Activated CD4-positive, alpha-beta T cell treated with anti-CD3 and anti-CD28 coated beads for 36 hours (primary cell): ENCODE measurements at regions of chr5 and their contacts with region 1.

Region 1: GRCh38 chr5:135398853-135399523 is at the start of gene MACROH2A1:
- DNase-seq: peak; percentile 92
- ATAC-seq: peak; percentile 88
- H3K4me3 Mint-ChIP-seq: peak within 1 kb of the TSS; percentile 86
- H3K27ac Mint-ChIP-seq: peak within 1 kb of the TSS; percentile 91
- H3K4me1 Mint-ChIP-seq: peaks cover 41% of the 10 kb centered on the region
- H3K27me3 Mint-ChIP-seq: no peaks in the 10 kb centered on the region
- total RNA-seq, gene MACROH2A1: 159 to 190 TPM

Region 2: GRCh38 chr5:134873987-134874830 is 524.8 kb before region 1 on chr5 and contains the start of gene TXNDC15:
- CTCF ChIA-PET with region 1: no interaction called
- POLR2A ChIA-PET with region 1: no interaction called
- intact Hi-C with region 1: loop called in 1 of 2 experiments (anchors 1 kb)
- DNase-seq: peak; percentile 90
- ATAC-seq: peak; percentile 83
- H3K4me3 Mint-ChIP-seq: peak within 1 kb of the TSS; percentile 88
- H3K27ac Mint-ChIP-seq: peak within 1 kb of the TSS; percentile 97
- H3K4me1 Mint-ChIP-seq: peaks cover 37% of the 10 kb centered on the region
- H3K27me3 Mint-ChIP-seq: no peaks in the 10 kb centered on the region
- total RNA-seq, gene TXNDC15: 16.6 to 29.1 TPM

Region 3: DNA sequence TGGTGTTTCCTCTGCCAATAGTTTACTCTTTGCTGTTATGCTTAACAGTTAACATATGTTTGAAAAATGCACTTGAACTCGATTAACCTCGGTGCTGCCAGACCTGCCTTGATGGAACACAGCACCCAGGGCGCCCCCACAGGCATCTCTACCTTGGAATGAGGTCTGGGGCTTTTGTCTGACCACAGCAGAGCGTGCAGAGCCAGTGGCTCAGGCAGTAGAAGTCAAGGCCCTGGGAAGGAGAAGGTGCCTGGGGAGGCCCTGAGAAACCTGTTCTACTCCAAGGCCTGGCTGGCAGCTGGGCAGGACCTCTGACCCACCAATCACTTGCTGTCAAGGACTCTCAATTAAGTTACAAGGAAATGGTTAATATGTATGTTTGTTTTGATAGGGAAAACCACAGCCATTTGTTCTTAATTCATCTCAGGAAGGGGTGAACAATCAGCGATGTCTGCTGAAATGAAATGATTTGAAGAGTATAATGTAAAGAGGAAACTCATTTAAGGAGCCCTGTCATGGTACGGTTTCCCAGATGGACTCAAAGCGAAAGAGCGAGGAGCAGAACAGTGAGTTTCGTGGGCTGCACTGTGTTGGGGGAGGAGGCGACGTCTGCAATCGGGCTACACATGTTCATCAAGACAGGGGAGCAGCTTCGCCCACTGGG is 21.9 kb before region 1 on chr5:
- CTCF ChIA-PET with region 1: interaction called, 3 read pairs
- POLR2A ChIA-PET with region 1: no interaction called
- intact Hi-C with region 1: loop called (anchors 1 kb)
- DNase-seq: peak; percentile 76
- ATAC-seq: peak; percentile 93
- H3K4me3 Mint-ChIP-seq: no peak overlapping the region
- H3K27ac Mint-ChIP-seq: peak overlapping the region; percentile 22
- H3K4me1 Mint-ChIP-seq: peaks cover 73% of the 10 kb centered on the region
- H3K27me3 Mint-ChIP-seq: no peaks in the 10 kb centered on the region

Region 4: GRCh38 chr5:135426102-135427082 is 27.4 kb after region 1 on chr5:
- CTCF ChIA-PET with region 1: interaction called, 4 read pairs
- POLR2A ChIA-PET with region 1: no interaction called
- intact Hi-C with region 1: loop called in 1 of 2 experiments (anchors 2 kb)
- DNase-seq: peak; percentile 31
- ATAC-seq: peak; percentile 86
- H3K4me3 Mint-ChIP-seq: no peak overlapping the region
- H3K27ac Mint-ChIP-seq: no peak overlapping the region
- H3K4me1 Mint-ChIP-seq: peaks cover 4% of the 10 kb centered on the region
- H3K27me3 Mint-ChIP-seq: peaks cover 3% of the 10 kb centered on the region